ENCODE measurements at regions of chr12 and their contacts with region 1.

Region 1: DNA sequence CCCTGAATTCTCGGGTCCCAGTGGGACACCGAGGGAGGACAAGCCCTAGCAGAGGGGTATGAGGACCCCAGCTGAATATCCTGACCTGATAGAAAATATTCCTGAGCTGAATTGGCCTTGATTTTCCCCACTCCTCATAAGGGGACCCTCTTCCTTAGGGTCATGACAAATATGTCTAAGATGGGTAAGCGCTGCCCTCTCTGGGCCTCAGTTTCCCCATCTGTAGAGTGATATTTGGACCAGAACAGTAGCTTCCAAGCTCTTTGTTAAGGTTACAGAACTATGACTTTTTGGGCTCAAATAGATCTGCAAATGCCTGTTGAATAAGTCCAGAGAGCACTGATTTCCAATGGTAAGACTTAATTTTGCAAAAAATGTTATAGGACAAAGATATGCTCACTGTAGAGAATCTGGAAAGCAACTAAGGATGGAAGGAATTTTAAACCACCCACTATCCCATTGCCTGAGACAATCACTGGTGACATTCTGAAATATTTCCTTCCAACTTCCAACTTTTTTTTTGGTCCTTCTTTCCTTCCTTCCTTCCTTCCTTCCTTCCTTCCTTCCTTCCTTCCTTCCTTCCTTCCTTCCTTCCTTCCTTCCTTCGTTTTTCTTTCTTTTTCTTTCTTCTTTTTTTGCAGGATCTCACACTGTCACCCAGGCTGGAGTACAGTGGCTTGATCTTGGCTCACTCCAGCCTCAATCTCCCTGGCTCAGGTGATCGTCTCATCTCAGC is 32.0 kb downstream of the MYL2 start:
- DNase-seq: no peak
- H3K4me3 ChIP-seq: no peak overlapping the region
- H3K27ac ChIP-seq: no peak overlapping the region
- H3K4me1 ChIP-seq: no peaks in the 10 kb centered on the region
- H3K27me3 ChIP-seq: no peaks in the 10 kb centered on the region
- CTCF ChIP-seq: no peak
- EP300 ChIP-seq: no peak
- POLR2A ChIP-seq: no peak
- RAD21 ChIP-seq: no peak

Region 2: GRCh38 chr12:110543252-110543959 is 345.0 kb before region 1 on chr12:
- CTCF ChIA-PET with region 1: no interaction called
- POLR2A ChIA-PET with region 1: no interaction called
- DNase-seq: no peak
- H3K4me3 ChIP-seq: no peak overlapping the region
- H3K27ac ChIP-seq: no peak overlapping the region
- H3K4me1 ChIP-seq: no peaks in the 10 kb centered on the region
- H3K27me3 ChIP-seq: no peaks in the 10 kb centered on the region
- CTCF ChIP-seq: no peak
- EP300 ChIP-seq: no peak
- POLR2A ChIP-seq: no peak
- RAD21 ChIP-seq: no peak

Region 3: GRCh38 chr12:110704748-110705147 is 183.7 kb before region 1 on chr12:
- CTCF ChIA-PET with region 1: interaction called, 10 read pairs
- POLR2A ChIA-PET with region 1: interaction called, 3 read pairs
- DNase-seq: no peak
- H3K4me3 ChIP-seq: no peak overlapping the region
- H3K27ac ChIP-seq: no peak overlapping the region
- H3K4me1 ChIP-seq: no peaks in the 10 kb centered on the region
- H3K27me3 ChIP-seq: no peaks in the 10 kb centered on the region
- CTCF ChIP-seq: peak; percentile 52 to 74 (median 64)
- EP300 ChIP-seq: no peak
- POLR2A ChIP-seq: no peak
- RAD21 ChIP-seq: peak; percentile 49 to 61

Region 4: GRCh38 chr12:110846615-110847566 is 41.5 kb before region 1 on chr12 and contains the start of gene CCDC63:
- CTCF ChIA-PET with region 1: interaction called, 28 read pairs
- POLR2A ChIA-PET with region 1: no interaction called
- DNase-seq: peak; percentile 25 to 83
- H3K4me3 ChIP-seq: peak within 1 kb of the TSS; percentile 66 to 85 (median 76)
- H3K27ac ChIP-seq: peak within 1 kb of the TSS; percentile 77
- H3K4me1 ChIP-seq: peaks cover 2 to 7% (median 5%) of the 10 kb centered on the region in 4 experiments; a peak in 6 of 7 replicates
- H3K27me3 ChIP-seq: peaks cover 0 to 3% (median under 1%) of the 10 kb centered on the region in 4 experiments; a peak in 1 of 7 replicates
- CTCF ChIP-seq: peak; percentile 41 to 49 (median 41); a peak in 3 of 4 replicates
- EP300 ChIP-seq: no peak
- POLR2A ChIP-seq: peak in 1 of 2 experiments; percentile 59; a peak in 2 of 3 replicates
- RAD21 ChIP-seq: peak in 1 of 2 experiments; percentile 32; a peak in 3 of 4 replicates
- total RNA-seq, gene CCDC63: 0.55 and 0.93 TPM in 2 replicates

Region 5: DNA sequence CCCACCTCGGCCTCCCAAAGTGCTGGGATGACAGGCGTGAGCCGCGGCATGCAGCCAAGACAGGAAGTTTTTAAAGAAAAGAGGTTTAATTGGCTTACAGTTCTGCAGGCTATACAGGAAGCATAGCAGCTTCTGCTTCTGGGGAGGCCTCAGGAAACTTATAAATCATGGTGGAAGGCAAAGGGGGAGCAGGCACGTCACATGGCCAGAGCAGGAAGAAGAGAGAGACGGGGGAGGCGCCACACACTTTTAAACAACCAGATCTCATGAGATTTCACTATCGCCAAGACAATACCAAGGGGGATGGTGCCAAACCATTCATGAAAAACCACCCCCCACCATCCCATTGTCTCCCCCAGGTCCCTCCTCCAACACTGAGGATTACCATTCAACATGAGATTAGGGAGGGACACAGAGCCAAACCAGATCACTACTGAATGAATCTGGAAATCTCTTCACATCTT is 27.6 kb before region 1 on chr12:
- CTCF ChIA-PET with region 1: interaction called, 19 read pairs
- POLR2A ChIA-PET with region 1: no interaction called
- DNase-seq: no peak
- H3K4me3 ChIP-seq: no peak overlapping the region
- H3K27ac ChIP-seq: peak overlapping the region; percentile 50; the same call in 1 of the 2 replicates
- H3K4me1 ChIP-seq: peaks cover 0 to 23% (median 5%) of the 10 kb centered on the region in 4 experiments; a peak in 5 of 7 replicates
- H3K27me3 ChIP-seq: no peaks in the 10 kb centered on the region
- CTCF ChIP-seq: no peak
- EP300 ChIP-seq: no peak
- POLR2A ChIP-seq: no peak
- RAD21 ChIP-seq: no peak

Region 6: GRCh38 chr12:110874781-110875180 is 13.6 kb before region 1 on chr12:
- CTCF ChIA-PET with region 1: interaction called, 15 read pairs
- POLR2A ChIA-PET with region 1: no interaction called
- DNase-seq: no peak
- H3K4me3 ChIP-seq: no peak overlapping the region
- H3K27ac ChIP-seq: no peak overlapping the region
- H3K4me1 ChIP-seq: no peaks in the 10 kb centered on the region
- H3K27me3 ChIP-seq: peaks cover 0 to 1% (median 0%) of the 10 kb centered on the region in 4 experiments; a peak in 1 of 7 replicates
- CTCF ChIP-seq: no peak
- EP300 ChIP-seq: no peak
- POLR2A ChIP-seq: no peak
- RAD21 ChIP-seq: no peak

Region 7: GRCh38 chr12:111149299-111149698 is 260.9 kb after region 1 on chr12:
- CTCF ChIA-PET with region 1: no interaction called
- POLR2A ChIA-PET with region 1: no interaction called
- DNase-seq: no peak
- H3K4me3 ChIP-seq: no peak overlapping the region
- H3K27ac ChIP-seq: no peak overlapping the region
- H3K4me1 ChIP-seq: peaks cover 2 to 11% (median 5%) of the 10 kb centered on the region in 4 experiments
- H3K27me3 ChIP-seq: no peaks in the 10 kb centered on the region
- CTCF ChIP-seq: peak; percentile 20 to 46 (median 40); a peak in 3 of 4 replicates
- EP300 ChIP-seq: no peak
- POLR2A ChIP-seq: no peak
- RAD21 ChIP-seq: peak; percentile 50 to 68